ENCODE measurements at regions of chr12 and their contacts with region 1.

Region 1: DNA sequence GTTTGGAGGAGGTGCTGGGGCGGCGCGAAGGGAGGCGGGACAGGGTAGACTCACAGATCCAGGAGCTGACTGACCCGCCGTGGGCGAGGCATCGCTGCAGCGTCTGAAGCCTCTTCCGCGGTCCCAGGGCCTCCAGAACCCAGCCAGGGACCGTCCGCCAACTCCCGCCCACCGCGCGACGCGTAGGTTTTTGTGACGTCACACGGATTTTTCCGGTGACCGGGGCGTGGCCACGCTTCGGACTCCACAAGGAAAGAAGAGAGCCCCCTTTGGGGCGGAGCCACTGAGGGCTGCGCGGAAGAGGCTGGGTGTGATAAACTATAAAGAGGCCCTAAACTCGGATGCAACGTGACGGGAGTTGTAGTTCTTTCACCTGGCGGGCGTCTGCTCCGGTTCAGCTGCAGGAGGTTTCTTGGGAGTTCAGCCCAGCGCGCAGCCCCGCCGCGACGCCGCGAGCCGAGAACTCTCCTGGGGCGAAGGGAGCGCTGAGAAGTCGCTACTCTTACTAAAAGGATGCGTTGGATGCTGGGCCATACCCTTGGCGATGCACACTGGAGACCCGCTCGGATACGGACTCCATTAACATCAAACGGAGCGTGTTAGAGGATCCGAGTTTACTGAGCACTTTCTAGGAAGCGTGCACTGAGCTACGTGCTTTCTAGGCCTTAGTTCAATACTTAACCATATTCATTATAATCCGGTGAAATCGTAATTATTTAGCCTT is at the start of gene AMN1:
- DNase-seq: peak; percentile 100
- H3K4me3 Mint-ChIP-seq: peak within 1 kb of the TSS; percentile 98
- H3K27ac Mint-ChIP-seq: peak within 1 kb of the TSS; percentile 99
- H3K4me1 Mint-ChIP-seq: peaks cover 35% of the 10 kb centered on the region
- H3K27me3 Mint-ChIP-seq: no peaks in the 10 kb centered on the region
- total RNA-seq, gene AMN1: 1.8 and 2.8 TPM in 2 replicates

Region 2: DNA sequence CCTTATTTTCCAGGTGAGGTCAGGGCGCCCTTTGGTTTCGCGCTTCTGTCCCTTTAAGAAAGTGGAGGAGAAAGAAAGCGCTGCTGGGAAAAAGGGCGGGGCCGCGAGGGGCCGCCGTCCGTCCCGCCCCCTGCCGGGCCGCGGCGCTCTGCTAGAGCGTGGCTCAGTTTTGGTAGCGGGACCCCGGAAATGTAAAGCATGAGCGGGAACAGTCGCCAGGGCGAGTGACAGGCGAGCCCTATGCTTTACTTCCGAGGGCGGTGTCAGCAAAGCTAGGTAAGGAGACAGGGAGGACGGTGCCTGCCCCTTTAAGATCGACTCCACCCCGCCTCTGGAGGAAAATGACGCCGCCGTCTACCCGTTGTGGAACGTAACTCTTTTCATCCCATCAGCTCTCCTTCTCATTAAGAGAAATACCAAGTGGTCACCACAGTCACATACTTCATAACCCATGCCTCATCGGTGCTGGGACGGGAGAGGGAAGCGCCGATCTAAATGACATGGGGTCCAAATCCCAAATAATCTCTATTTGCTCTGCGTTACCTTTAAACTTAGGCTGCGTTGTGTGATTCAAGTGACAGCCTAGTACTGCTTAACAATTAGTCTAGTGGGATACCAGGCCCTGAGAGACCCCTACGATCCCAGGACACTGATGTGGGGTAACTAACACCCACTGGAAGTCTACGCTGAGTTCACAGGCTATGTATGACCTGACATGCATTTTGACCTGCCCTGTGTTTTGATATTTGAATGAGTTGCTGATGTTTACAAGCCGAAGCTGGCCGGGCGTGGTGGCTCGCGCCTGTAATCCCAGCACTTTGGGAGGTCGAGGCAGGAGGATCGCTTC is 69.8 kb before region 1 on chr12 and contains the start of gene ETFBKMT:
- intact Hi-C with region 1: loop called (anchors 1 kb)
- DNase-seq: peak; percentile 95
- H3K4me3 Mint-ChIP-seq: peak within 1 kb of the TSS; percentile 95
- H3K27ac Mint-ChIP-seq: peak within 1 kb of the TSS; percentile 97
- H3K4me1 Mint-ChIP-seq: peaks cover 5% of the 10 kb centered on the region
- H3K27me3 Mint-ChIP-seq: no peaks in the 10 kb centered on the region
- total RNA-seq, gene ETFBKMT: 0.37 and 0.39 TPM in 2 replicates

Region 3: GRCh38 chr12:31672521-31672920 is 56.6 kb before region 1 on chr12:
- intact Hi-C with region 1: no loop called
- DNase-seq: no peak
- H3K4me3 Mint-ChIP-seq: no peak overlapping the region
- H3K27ac Mint-ChIP-seq: no peak overlapping the region
- H3K4me1 Mint-ChIP-seq: no peaks in the 10 kb centered on the region
- H3K27me3 Mint-ChIP-seq: no peaks in the 10 kb centered on the region

Region 4: DNA sequence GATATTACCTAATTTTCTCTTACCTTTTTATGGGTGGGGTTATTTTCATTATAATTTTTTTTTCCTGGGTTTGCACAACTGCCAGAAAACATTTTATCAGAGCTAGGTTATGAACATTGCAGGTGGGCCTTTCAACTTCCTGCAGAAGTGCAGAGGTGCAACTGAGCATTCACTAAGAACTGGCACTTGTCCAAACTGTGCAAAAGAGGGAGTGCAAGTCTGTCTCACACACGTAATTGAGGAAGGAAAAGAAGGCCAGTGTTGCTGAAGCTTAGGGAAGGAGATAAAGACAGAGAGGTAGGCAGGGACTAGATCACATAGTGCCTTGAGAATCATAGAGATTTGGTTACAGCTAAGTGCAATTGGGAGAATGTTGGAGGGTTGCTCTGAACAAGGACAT is 13.8 kb after region 1 on chr12:
- intact Hi-C with region 1: no loop called
- DNase-seq: no peak
- H3K4me3 Mint-ChIP-seq: no peak overlapping the region
- H3K27ac Mint-ChIP-seq: no peak overlapping the region
- H3K4me1 Mint-ChIP-seq: peaks cover 26% of the 10 kb centered on the region
- H3K27me3 Mint-ChIP-seq: peaks cover 6% of the 10 kb centered on the region

Region 5: GRCh38 chr12:32106517-32107358 is 377.7 kb after region 1 on chr12 and contains the start of gene BICD1:
- intact Hi-C with region 1: no loop called
- DNase-seq: peak; percentile 65
- H3K4me3 Mint-ChIP-seq: peak within 1 kb of the TSS; percentile 91
- H3K27ac Mint-ChIP-seq: peak within 1 kb of the TSS; percentile 81
- H3K4me1 Mint-ChIP-seq: peaks cover 26% of the 10 kb centered on the region
- H3K27me3 Mint-ChIP-seq: peaks cover 16% of the 10 kb centered on the region
- total RNA-seq, gene BICD1: 8.0 and 8.8 TPM in 2 replicates